ENCODE measurements at regions of chr15 and their contacts with region 1.

Region 1: GRCh38 chr15:34241372-34242330 is 16.8 kb downstream of the EMC4 start:
- DNase-seq: peak; percentile 61
- ATAC-seq: peak; percentile 79
- H3K4me3 Mint-ChIP-seq: no peak overlapping the region
- H3K27ac Mint-ChIP-seq: no peak overlapping the region
- H3K4me1 Mint-ChIP-seq: peaks cover 18% of the 10 kb centered on the region
- H3K27me3 Mint-ChIP-seq: no peaks in the 10 kb centered on the region

Region 2: DNA sequence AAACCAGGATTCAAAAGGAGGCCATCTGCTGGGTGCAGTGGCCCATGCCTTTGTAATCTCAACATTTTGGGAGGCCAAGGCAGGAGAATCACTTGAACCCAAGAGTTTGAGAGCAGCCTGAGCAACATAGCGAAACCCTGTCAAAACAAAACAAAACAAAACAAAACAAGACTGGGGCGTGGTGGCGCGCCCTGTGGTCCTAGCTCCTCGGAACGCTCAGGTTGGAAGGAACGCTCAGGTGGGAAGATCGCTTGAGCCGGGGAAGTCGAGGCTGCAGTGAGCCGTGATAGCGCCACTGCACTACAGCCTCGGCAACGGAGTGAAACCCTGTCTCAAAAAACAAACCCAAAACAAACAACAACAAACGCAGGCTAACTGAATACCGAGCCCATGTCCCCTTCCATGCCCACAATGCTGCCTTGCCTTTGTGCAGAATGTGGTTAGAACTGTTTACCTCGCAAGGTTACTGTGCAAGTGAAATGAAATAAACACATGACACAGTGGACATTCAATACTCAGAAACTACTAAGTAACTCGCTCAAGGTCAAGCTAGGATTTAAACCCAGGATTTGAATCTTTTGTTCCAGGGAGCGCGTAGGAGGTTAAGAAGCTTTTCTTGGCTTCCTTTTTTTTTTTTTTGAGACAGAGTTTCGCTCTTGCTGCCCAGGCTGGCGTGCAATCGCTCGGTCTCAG is 17.6 kb before region 1 on chr15:
- CTCF ChIA-PET with region 1: interaction called, 15 read pairs
- POLR2A ChIA-PET with region 1: no interaction called
- DNase-seq: no peak
- ATAC-seq: peak; percentile 10
- H3K4me3 Mint-ChIP-seq: peak overlapping the region; percentile 97
- H3K27ac Mint-ChIP-seq: peak overlapping the region; percentile 92
- H3K4me1 Mint-ChIP-seq: peaks cover 31% of the 10 kb centered on the region
- H3K27me3 Mint-ChIP-seq: no peaks in the 10 kb centered on the region

Region 3: DNA sequence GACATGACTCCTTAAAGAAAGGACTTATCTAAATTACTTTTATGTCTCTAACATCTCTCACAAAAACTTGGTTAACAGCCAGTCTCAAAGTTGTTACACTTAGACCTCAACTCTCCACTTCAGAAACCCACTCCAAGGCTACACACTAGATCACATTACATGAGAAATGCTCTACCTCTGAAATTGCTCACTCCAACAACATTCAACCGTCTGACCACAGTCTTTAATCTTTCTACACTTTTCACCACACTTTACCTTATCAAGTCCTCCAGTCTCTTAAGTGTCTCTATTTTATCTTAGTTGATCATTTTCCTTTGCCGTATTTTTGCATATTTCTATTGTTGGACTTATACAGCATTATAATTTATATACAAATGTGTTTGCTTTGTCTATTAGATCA is 90.2 kb after region 1 on chr15:
- CTCF ChIA-PET with region 1: interaction called, 14 read pairs
- POLR2A ChIA-PET with region 1: interaction called, 3 read pairs
- DNase-seq: peak; percentile 33
- ATAC-seq: peak; percentile 68
- H3K4me3 Mint-ChIP-seq: peak overlapping the region; percentile 38
- H3K27ac Mint-ChIP-seq: peak overlapping the region; percentile 90
- H3K4me1 Mint-ChIP-seq: peaks cover 77% of the 10 kb centered on the region
- H3K27me3 Mint-ChIP-seq: no peaks in the 10 kb centered on the region

Region 4: DNA sequence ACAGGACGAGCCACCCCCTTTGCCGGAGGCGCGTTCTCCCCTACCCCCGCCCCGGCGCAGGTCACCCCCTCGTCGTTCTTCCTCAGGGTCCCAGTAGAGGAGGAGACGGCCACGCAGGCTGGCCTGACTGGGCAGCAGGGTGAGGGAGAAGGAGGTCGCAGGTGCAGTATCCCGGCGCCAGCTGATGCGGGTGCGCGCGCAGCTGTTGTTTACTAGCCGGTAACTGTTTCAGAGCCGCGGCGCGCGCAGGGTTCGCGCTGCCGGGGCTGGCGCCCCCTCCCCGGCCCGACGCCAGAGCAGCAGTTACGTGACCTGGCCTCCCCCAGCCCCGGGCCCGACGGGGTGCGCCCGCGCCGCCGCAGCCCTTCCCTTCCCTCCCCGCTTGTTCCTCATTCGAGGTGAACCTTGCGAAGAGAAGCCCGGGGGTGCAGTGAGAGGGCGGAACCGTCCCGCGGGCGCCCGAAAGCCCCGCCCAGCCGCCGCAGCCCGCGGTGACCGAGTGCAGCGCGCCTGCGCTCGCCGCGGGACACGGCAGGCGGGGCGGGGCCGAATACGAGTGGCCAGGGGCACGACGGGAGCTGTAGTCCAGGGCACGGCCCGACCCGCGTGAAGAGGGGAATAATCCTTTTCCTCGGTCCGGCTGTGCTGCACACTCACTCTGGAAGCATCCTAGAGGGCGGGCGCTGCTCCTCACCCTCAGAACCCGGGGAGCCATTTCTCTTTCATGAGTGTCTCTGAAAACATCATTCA is 96.1 kb after region 1 on chr15 and contains the start of gene SLC12A6:
- CTCF ChIA-PET with region 1: interaction called, 19 read pairs
- POLR2A ChIA-PET with region 1: interaction called, 5 read pairs
- DNase-seq: peak; percentile 93
- ATAC-seq: peak; percentile 83
- H3K4me3 Mint-ChIP-seq: peak within 1 kb of the TSS; percentile 97
- H3K27ac Mint-ChIP-seq: peak within 1 kb of the TSS; percentile 97
- H3K4me1 Mint-ChIP-seq: peaks cover 58% of the 10 kb centered on the region
- H3K27me3 Mint-ChIP-seq: no peaks in the 10 kb centered on the region
- total RNA-seq, gene SLC12A6: 24.8 to 25.3 TPM

Region 5: DNA sequence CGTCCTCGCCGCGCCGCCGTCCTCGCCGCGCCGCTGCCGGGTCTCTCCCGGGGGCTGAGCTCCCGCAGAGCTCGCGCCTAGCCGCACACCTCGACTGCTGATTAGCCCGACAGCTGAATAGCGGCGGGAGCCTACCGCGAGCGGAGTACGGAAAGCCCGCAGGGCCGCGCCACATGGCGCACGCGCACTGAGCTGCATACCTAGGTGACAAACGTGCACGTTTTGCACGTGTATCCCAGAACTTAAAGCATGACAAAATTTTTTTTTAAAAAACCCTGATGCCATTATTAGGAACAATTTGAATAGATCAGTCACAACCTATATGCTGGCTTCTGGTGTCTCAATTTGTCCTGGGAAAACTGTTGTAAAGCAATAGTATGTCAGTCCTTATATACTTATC is 196.0 kb after region 1 on chr15 and contains the start of gene GOLGA8A:
- CTCF ChIA-PET with region 1: no interaction called
- POLR2A ChIA-PET with region 1: no interaction called
- DNase-seq: peak; percentile 85
- ATAC-seq: peak; percentile 79
- H3K4me3 Mint-ChIP-seq: peak within 1 kb of the TSS; percentile 89
- H3K27ac Mint-ChIP-seq: peak within 1 kb of the TSS; percentile 93
- H3K4me1 Mint-ChIP-seq: peaks cover 26% of the 10 kb centered on the region
- H3K27me3 Mint-ChIP-seq: peaks cover 14% of the 10 kb centered on the region
- total RNA-seq, gene GOLGA8A: 207 to 215 TPM

Measured in activated CD8-positive, alpha-beta T cell treated with anti-CD3 and anti-CD28 coated beads, Interleukin-2, amount 10 ng/mL, durations not matched to agents 7 days and 5 days (primary cell).